ENCODE measurements at regions of chr13 and their contacts with region 1.

Region 1: GRCh38 chr13:99436686-99437416 is 64.4 kb upstream of the TM9SF2 start:
- DNase-seq: peak; percentile 96 to 98
- ATAC-seq: peak; percentile 49 to 78 (median 51)
- H3K4me3 ChIP-seq: no peak overlapping the region
- H3K4me3 Mint-ChIP-seq: peak overlapping the region; percentile 65
- H3K27ac ChIP-seq: no peak overlapping the region
- H3K27ac Mint-ChIP-seq: peak overlapping the region; percentile 81 to 82
- H3K4me1 ChIP-seq: peaks cover 54% of the 10 kb centered on the region
- H3K4me1 Mint-ChIP-seq: peaks cover 34 to 46% of the 10 kb centered on the region in 2 donors
- H3K27me3 ChIP-seq: no peaks in the 10 kb centered on the region
- H3K27me3 Mint-ChIP-seq: peaks cover 15 to 22% of the 10 kb centered on the region in 2 donors
- CTCF ChIP-seq: peak; percentile 100

Region 2: DNA sequence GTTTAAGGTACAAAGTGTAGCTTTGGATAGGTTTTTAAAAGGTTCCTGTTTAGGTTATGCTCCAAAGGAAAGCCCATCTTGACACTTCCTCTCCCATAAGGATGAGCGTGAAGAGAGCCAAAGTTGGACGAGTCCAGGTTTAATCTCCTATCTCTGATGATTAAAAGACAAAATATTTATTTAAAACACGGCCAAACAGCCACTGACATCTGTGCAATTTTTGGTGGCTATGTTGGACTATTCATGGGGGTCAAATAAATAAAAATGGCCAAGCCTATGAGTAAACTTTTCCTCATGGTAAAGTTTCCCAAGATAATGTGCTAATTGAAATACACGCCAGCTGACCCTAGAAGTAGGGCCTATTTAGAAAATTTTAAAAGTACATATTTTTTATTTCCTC is 390.0 kb before region 1 on chr13:
- intact Hi-C with region 1: loop called (anchors 2 kb)
- DNase-seq: no peak
- ATAC-seq: no peak
- H3K4me3 ChIP-seq: no peak overlapping the region
- H3K4me3 Mint-ChIP-seq: peak overlapping the region; percentile 81
- H3K27ac ChIP-seq: peak overlapping the region; percentile 70
- H3K27ac Mint-ChIP-seq: peak overlapping the region; percentile 90 to 91
- H3K4me1 ChIP-seq: peaks cover 77% of the 10 kb centered on the region
- H3K4me1 Mint-ChIP-seq: peaks cover 55 to 68% of the 10 kb centered on the region in 2 donors
- H3K27me3 ChIP-seq: no peaks in the 10 kb centered on the region
- H3K27me3 Mint-ChIP-seq: peaks cover 18 to 25% of the 10 kb centered on the region in 2 donors
- CTCF ChIP-seq: no peak

Region 3: DNA sequence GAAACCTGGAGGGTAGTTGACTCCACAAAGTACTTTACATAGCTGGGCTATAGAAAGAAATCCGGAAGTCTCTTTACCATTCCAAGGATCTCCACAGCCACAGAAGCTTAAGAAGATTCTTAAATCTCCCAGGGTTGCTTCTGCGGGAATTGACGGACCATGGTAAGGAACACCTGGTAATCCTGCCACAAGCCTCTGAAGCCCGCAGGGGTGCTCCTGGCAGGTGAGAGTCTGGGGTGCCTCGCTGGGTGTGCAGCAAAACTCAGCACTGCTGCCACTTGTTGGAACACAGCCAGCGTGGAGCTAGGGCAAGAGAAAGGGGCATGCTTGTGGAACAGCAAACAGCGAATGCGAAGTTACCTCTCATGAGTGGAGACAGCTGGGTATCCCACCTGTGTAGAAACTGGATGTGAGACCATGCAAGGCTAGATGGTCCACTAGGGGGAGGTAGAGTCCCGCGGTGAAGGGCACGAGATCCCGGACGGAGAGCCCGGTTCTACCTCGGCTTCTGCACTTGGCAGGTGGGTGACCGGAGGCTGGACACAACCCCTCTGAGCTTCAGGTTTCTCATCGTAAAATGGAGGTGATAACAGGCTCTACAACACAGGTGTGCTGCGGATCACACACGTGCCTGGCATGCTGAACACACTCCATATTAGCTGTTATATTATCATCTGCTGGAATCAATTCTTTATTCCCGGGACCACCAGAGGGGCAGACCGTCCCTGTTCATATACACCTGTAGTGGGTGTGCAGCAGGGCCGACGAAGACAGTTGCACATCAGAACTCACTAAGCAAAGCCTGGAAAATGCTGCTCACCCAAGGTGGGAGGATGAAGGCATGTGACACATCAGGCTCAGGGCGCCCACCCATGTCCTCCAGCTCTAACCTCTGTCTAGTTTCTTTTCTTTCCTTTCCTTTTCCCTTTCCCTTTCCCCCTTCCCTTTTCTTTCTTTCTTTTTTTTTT is 260.3 kb before region 1 on chr13:
- intact Hi-C with region 1: loop called (anchors 1 kb)
- DNase-seq: peak; percentile 70 to 91
- ATAC-seq: peak; percentile 90 to 99 (median 98)
- H3K4me3 ChIP-seq: no peak overlapping the region
- H3K4me3 Mint-ChIP-seq: no peak overlapping the region
- H3K27ac ChIP-seq: no peak overlapping the region
- H3K27ac Mint-ChIP-seq: no peak overlapping the region
- H3K4me1 ChIP-seq: peaks cover 28% of the 10 kb centered on the region
- H3K4me1 Mint-ChIP-seq: peaks cover 6 to 7% of the 10 kb centered on the region in 2 donors
- H3K27me3 ChIP-seq: peaks cover 3% of the 10 kb centered on the region
- H3K27me3 Mint-ChIP-seq: peaks cover 21 to 43% of the 10 kb centered on the region in 2 donors
- CTCF ChIP-seq: peak; percentile 86

Region 4: GRCh38 chr13:99218969-99219368 is 217.9 kb before region 1 on chr13:
- intact Hi-C with region 1: loop called (anchors 5 kb)
- DNase-seq: peak; percentile 52 to 90
- ATAC-seq: peak; percentile 70 to 83 (median 81)
- H3K4me3 ChIP-seq: no peak overlapping the region
- H3K4me3 Mint-ChIP-seq: peak overlapping the region; percentile 86
- H3K27ac ChIP-seq: peak overlapping the region; percentile 74
- H3K27ac Mint-ChIP-seq: peak overlapping the region; percentile 83 to 89
- H3K4me1 ChIP-seq: peaks cover 64% of the 10 kb centered on the region
- H3K4me1 Mint-ChIP-seq: peaks cover 86% of the 10 kb centered on the region in 2 donors
- H3K27me3 ChIP-seq: no peaks in the 10 kb centered on the region
- H3K27me3 Mint-ChIP-seq: no peaks in the 10 kb centered on the region
- CTCF ChIP-seq: no peak

Region 5: DNA sequence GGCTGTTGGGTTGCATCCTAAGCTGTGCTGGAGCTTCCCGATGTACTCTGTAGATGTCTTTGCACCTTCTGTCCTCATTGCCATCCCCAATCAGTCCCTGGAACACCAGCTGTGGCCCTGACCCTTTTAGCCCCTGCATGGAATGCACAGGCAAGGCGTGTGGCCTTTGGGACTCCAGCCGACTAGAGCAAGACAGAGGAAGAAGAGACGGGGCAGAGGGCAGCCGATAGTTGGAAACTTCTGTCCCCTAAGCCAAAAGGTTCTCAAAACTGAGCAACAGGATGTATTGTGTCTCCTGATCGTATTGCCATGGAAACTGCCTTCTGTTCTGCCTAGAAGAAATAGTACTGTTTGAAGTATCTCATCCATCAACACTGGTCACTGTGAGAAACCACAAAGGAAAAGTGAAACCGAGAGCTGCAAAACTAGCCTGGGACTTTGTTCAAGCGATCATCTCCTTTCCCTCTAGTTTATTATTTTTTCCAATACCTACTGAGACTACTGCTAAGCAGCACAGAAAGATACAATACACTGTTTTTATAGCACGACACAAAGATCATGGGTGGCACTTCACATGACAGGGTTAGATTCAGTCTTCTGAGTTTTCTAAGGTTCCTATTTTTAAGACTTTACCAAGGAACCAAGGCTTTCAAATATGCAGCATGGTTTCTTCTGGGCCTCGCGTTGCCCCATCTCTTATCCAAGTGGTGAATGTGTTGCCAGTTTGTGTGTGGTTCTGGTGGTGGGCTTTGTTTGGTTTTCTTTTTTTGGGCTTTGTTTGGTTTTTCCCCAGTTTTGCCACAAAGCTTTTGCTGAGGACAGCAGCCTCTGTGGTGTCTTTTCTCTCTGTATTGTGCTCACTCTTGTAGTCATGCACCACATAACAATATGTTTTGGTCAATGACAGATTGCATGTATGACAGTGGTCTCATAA is 80.4 kb before region 1 on chr13:
- intact Hi-C with region 1: loop called (anchors 1 kb)
- DNase-seq: peak; percentile 51 to 94
- ATAC-seq: peak; percentile 61 to 79 (median 77)
- H3K4me3 ChIP-seq: no peak overlapping the region
- H3K4me3 Mint-ChIP-seq: peak overlapping the region; percentile 81
- H3K27ac ChIP-seq: peak overlapping the region; percentile 99
- H3K27ac Mint-ChIP-seq: peak overlapping the region; percentile 89 to 91
- H3K4me1 ChIP-seq: peaks cover 88% of the 10 kb centered on the region
- H3K4me1 Mint-ChIP-seq: peaks cover 89% of the 10 kb centered on the region in 2 donors
- H3K27me3 ChIP-seq: no peaks in the 10 kb centered on the region
- H3K27me3 Mint-ChIP-seq: no peaks in the 10 kb centered on the region
- CTCF ChIP-seq: no peak

Region 6: GRCh38 chr13:99386911-99387788 is 49.7 kb before region 1 on chr13:
- intact Hi-C with region 1: loop called (anchors 1 kb)
- DNase-seq: peak; percentile 73 to 93
- ATAC-seq: peak; percentile 63 to 70 (median 69)
- H3K4me3 ChIP-seq: no peak overlapping the region
- H3K4me3 Mint-ChIP-seq: peak overlapping the region; percentile 7
- H3K27ac ChIP-seq: no peak overlapping the region
- H3K27ac Mint-ChIP-seq: peak overlapping the region; percentile 6 to 55
- H3K4me1 ChIP-seq: peaks cover 53% of the 10 kb centered on the region
- H3K4me1 Mint-ChIP-seq: peaks cover 26 to 31% of the 10 kb centered on the region in 2 donors
- H3K27me3 ChIP-seq: no peaks in the 10 kb centered on the region
- H3K27me3 Mint-ChIP-seq: no peaks in the 10 kb centered on the region
- CTCF ChIP-seq: peak; percentile 65

Region 7: GRCh38 chr13:99501184-99501847 is 64.5 kb after region 1 on chr13 and contains the start of gene TM9SF2:
- intact Hi-C with region 1: loop called (anchors 1 kb)
- DNase-seq: peak; percentile 97 to 99
- ATAC-seq: peak; percentile 61 to 78 (median 74)
- H3K4me3 ChIP-seq: peak within 1 kb of the TSS; percentile 88
- H3K4me3 Mint-ChIP-seq: peak within 1 kb of the TSS; percentile 96
- H3K27ac ChIP-seq: peak within 1 kb of the TSS; percentile 89
- H3K27ac Mint-ChIP-seq: peak within 1 kb of the TSS; percentile 94 to 98
- H3K4me1 ChIP-seq: peaks cover 45% of the 10 kb centered on the region
- H3K4me1 Mint-ChIP-seq: peaks cover 81 to 83% of the 10 kb centered on the region in 2 donors
- H3K27me3 ChIP-seq: no peaks in the 10 kb centered on the region
- H3K27me3 Mint-ChIP-seq: no peaks in the 10 kb centered on the region
- CTCF ChIP-seq: no peak
- total RNA-seq, gene TM9SF2: 41.8 to 62.1 (median 51.4) TPM